ENCODE measurements at regions of chr3 and their contacts with region 1.

Region 1: DNA sequence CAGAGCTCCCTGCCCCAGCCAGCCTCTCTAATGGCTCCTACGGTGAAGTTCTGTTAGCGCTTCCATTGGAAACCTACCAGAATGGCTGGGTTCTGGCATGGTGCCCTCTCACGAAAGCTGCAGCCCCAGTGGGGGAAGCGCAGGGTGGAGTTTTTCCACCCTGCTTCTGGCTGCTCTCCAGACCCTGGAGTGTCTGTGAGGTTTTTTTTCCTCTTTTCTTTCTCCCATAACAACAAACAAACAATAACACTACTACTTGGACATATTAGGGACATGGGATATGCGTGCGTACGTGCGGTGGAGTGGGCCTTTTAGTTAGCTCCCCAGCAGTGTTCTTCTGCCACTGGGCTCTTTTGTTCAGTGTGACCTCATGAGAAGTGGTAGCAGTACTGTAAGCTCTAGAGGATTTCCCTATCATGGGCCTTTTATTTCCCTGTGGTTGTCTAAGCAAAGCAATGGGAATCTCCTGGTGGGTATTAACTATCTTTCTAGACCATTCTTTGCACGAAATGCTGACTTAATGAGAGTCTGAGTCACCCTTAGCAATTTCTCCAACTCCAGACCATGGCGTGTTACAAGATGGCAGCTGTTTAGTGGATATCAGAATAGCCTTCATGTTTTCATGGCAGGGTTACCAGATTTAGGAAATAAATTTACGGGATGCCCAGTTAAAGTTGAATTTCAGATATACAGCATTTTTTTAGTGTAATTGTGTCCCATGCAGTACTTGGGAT is 161.9 kb downstream of the FNDC3B start:
- DNase-seq: peak; percentile 77 to 86
- ATAC-seq: peak; percentile 47 to 75 (median 62)
- H3K4me3 ChIP-seq: peak overlapping the region; percentile 17
- H3K27ac ChIP-seq: peak overlapping the region; percentile 68
- H3K4me1 ChIP-seq: peaks cover 40% of the 10 kb centered on the region
- H3K27me3 ChIP-seq: no peaks in the 10 kb centered on the region
- CTCF ChIP-seq: no peak

Region 2: GRCh38 chr3:172159962-172160538 is 41.3 kb before region 1 on chr3:
- intact Hi-C with region 1: loop called in 1 of 2 experiments (anchors 5 kb)
- DNase-seq: peak in 1 of 2 donors; percentile 55
- ATAC-seq: peak in 3 of 4 donors; percentile 38 to 81 (median 76)
- H3K4me3 ChIP-seq: no peak overlapping the region
- H3K27ac ChIP-seq: peak overlapping the region; percentile 54
- H3K4me1 ChIP-seq: peaks cover 52% of the 10 kb centered on the region
- H3K27me3 ChIP-seq: no peaks in the 10 kb centered on the region
- CTCF ChIP-seq: no peak

Region 3: DNA sequence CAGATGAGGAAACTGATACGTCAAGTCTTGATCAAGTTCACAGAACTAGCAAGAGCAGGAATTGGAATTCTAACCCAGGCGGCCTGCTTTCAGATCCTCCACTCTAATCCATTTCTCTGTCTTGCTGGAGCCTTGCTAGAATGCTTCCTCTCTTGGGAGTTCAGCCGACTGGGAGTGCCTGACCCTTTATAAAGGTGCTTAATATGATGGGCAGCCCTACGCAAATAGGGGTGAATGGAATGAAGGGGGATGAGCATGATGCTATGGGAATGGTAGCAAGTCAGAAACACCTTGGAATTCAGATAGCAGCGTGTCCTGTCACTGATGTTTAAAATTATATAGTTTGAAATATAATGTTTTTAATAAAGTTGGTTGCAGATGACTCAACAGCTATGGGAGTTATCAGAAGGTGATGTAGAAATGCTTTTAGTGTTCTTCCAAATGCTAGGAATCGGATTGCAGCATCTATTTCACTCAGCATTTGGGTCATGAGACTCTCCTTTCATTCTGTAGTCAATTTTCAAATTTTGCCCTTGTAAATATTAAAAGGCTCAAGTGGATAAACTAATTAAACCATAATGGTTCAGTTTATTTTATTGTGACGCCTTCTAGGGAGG is 11.2 kb before region 1 on chr3:
- intact Hi-C with region 1: no loop called
- DNase-seq: no peak
- ATAC-seq: peak in 2 of 4 donors; percentile 40 to 41
- H3K4me3 ChIP-seq: no peak overlapping the region
- H3K27ac ChIP-seq: no peak overlapping the region
- H3K4me1 ChIP-seq: peaks cover 37% of the 10 kb centered on the region
- H3K27me3 ChIP-seq: no peaks in the 10 kb centered on the region
- CTCF ChIP-seq: no peak

Measured in psoas muscle (tissue), 8 donors.